ENCODE measurements at regions of chr6 and their contacts with region 1.

Region 1: GRCh38 chr6:150142670-150143515 is at the start of gene PPP1R14C:
- DNase-seq: peak; percentile 65
- H3K4me3 Mint-ChIP-seq: peak within 1 kb of the TSS; percentile 83
- H3K27ac Mint-ChIP-seq: peak within 1 kb of the TSS; percentile 96
- H3K4me1 Mint-ChIP-seq: peaks cover 35% of the 10 kb centered on the region
- H3K27me3 Mint-ChIP-seq: no peaks in the 10 kb centered on the region
- CTCF ChIP-seq: no peak
- total RNA-seq, gene PPP1R14C: 32.0 and 38.7 TPM in 2 replicates

Region 2: GRCh38 chr6:150126681-150127289 is 16.1 kb before region 1 on chr6:
- CTCF ChIA-PET with region 1: no interaction called
- POLR2A ChIA-PET with region 1: no interaction called
- intact Hi-C with region 1: no loop called
- DNase-seq: no peak
- H3K4me3 Mint-ChIP-seq: no peak overlapping the region
- H3K27ac Mint-ChIP-seq: no peak overlapping the region
- H3K4me1 Mint-ChIP-seq: no peaks in the 10 kb centered on the region
- H3K27me3 Mint-ChIP-seq: no peaks in the 10 kb centered on the region
- CTCF ChIP-seq: no peak

Region 3: DNA sequence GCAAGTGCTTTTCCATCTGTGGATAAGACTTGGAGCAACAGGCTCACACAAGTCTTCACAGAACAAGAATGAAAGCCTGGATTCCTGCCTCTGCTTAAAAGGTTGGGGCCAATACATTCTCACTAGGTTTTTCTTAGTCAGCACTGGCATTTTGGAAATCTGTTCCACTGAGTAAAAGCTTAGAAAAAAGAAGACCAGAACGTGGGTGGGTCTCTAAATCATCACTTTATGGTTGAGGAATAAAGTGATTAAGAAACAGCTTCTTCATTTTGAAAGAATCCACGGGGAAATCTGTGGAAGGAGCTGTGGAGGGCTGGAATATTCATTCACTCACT is 10.6 kb after region 1 on chr6:
- CTCF ChIA-PET with region 1: interaction called, 8 read pairs
- POLR2A ChIA-PET with region 1: interaction called, 140 read pairs
- intact Hi-C with region 1: no loop called
- DNase-seq: no peak
- H3K4me3 Mint-ChIP-seq: peak overlapping the region; percentile 25
- H3K27ac Mint-ChIP-seq: peak overlapping the region; percentile 77
- H3K4me1 Mint-ChIP-seq: peaks cover 52% of the 10 kb centered on the region
- H3K27me3 Mint-ChIP-seq: no peaks in the 10 kb centered on the region
- CTCF ChIP-seq: no peak

Region 4: DNA sequence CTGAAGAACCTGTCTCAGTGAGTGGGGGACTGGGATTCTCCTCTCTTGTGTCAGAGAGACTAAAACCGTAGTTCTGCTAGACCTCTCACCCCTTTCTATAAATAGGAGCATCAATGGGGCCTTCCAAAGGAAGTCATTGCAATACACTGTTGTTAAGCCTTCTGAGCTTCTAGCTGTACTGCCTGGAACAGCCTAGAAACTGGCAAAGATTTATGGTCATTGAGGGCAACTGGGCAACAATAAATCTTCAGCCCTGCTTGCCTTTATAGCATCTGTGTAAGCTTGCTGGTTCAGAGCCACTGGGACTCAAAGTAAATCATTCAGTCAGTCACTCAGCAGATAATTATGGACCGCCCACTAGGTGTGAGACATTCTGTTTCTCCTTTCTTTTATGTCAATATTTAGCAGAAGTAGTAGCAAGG is 53.1 kb after region 1 on chr6:
- CTCF ChIA-PET with region 1: interaction called, 11 read pairs
- POLR2A ChIA-PET with region 1: interaction called, 26 read pairs
- intact Hi-C with region 1: loop called (anchors 5 kb)
- DNase-seq: no peak
- H3K4me3 Mint-ChIP-seq: no peak overlapping the region
- H3K27ac Mint-ChIP-seq: peak overlapping the region; percentile 67
- H3K4me1 Mint-ChIP-seq: peaks cover 57% of the 10 kb centered on the region
- H3K27me3 Mint-ChIP-seq: no peaks in the 10 kb centered on the region
- CTCF ChIP-seq: no peak

Region 5: DNA sequence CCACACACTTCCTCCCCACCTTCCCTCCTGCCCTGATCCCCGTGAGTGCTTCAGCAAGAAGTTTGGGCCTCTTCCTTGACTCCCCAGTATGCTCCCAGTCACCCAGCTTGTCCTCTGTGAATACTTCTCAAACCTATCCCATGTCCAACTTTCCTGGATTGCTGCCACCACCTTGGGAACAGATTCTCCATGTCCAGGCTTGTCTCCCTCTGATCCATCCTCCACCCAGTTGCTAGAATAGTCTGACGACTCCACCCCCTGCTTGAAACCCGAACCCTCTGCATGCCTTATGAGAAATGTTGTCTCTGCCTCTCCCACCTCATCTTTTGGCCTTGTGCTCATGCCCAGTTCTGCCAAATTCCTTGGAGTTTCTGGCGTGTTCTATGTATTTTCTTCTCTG is 107.9 kb after region 1 on chr6:
- CTCF ChIA-PET with region 1: interaction called, 10 read pairs
- POLR2A ChIA-PET with region 1: interaction called, 246 read pairs
- intact Hi-C with region 1: loop called (anchors 1 kb)
- DNase-seq: peak; percentile 99
- H3K4me3 Mint-ChIP-seq: peak overlapping the region; percentile 46
- H3K27ac Mint-ChIP-seq: peak overlapping the region; percentile 95
- H3K4me1 Mint-ChIP-seq: peaks cover 42% of the 10 kb centered on the region
- H3K27me3 Mint-ChIP-seq: no peaks in the 10 kb centered on the region
- CTCF ChIP-seq: no peak

Region 6: GRCh38 chr6:150293423-150294173 is 150.7 kb after region 1 on chr6:
- CTCF ChIA-PET with region 1: no interaction called
- POLR2A ChIA-PET with region 1: interaction called, 22 read pairs
- intact Hi-C with region 1: no loop called
- DNase-seq: peak; percentile 69
- H3K4me3 Mint-ChIP-seq: no peak overlapping the region
- H3K27ac Mint-ChIP-seq: peak overlapping the region; percentile 98
- H3K4me1 Mint-ChIP-seq: peaks cover 46% of the 10 kb centered on the region
- H3K27me3 Mint-ChIP-seq: no peaks in the 10 kb centered on the region
- CTCF ChIP-seq: no peak

Region 7: GRCh38 chr6:150435832-150436231 is 292.9 kb after region 1 on chr6:
- CTCF ChIA-PET with region 1: no interaction called
- POLR2A ChIA-PET with region 1: no interaction called
- intact Hi-C with region 1: no loop called
- DNase-seq: no peak
- H3K4me3 Mint-ChIP-seq: no peak overlapping the region
- H3K27ac Mint-ChIP-seq: no peak overlapping the region
- H3K4me1 Mint-ChIP-seq: no peaks in the 10 kb centered on the region
- H3K27me3 Mint-ChIP-seq: no peaks in the 10 kb centered on the region
- CTCF ChIP-seq: no peak

Measured in MCF 10A (cell line).